ENCODE measurements at regions of chr20 and their contacts with region 1.

Region 1: DNA sequence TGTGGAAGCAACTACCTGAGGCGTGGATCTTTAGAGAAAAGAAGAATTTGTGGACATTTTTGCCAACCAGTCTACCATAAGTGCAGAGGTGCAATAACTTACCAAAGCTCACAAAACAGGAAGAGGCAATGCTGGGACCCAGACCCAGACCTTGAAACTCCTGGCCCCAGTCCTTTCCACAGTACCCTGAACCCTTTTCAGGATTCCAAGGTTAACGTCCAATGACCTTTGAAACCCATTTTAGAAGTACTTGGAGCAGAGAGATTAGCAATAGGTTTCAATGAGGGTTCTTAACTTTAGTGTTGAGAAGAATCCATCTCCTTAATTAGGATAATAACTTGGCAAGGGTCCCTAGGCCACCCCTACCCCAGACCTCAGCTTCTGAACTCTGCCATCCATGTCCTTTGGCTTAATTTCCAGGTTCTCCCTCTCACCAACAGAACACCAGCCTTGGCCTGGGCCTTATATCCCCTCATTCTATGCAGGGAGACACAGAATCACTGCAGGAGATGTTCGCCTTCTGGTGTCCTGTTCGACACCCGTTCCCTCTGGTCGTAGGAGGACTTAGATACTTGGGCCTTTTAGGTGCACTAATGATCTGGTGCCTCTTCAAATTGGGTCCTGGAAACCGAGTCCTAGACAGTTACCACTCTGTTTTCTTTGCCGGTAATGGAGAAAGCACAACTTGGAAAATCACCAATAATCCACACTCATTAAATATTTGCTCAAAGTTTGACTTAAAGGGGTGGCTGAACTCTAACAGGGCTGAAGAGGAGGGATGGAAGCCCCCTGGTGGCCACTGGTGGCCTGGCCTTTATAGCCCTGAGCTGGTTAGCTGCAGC is 40.6 kb downstream of the ISM1 start:
- DNase-seq: peak; percentile 81
- ATAC-seq: peak; percentile 96
- H3K4me3 Mint-ChIP-seq: no peak overlapping the region
- H3K27ac Mint-ChIP-seq: no peak overlapping the region
- H3K4me1 Mint-ChIP-seq: peaks cover 20% of the 10 kb centered on the region
- H3K27me3 Mint-ChIP-seq: no peaks in the 10 kb centered on the region

Region 2: GRCh38 chr20:12687476-12687875 is 574.2 kb before region 1 on chr20:
- CTCF ChIA-PET with region 1: no interaction called
- POLR2A ChIA-PET with region 1: no interaction called
- intact Hi-C with region 1: no loop called
- DNase-seq: no peak
- ATAC-seq: no peak
- H3K4me3 Mint-ChIP-seq: no peak overlapping the region
- H3K27ac Mint-ChIP-seq: no peak overlapping the region
- H3K4me1 Mint-ChIP-seq: no peaks in the 10 kb centered on the region
- H3K27me3 Mint-ChIP-seq: no peaks in the 10 kb centered on the region

Region 3: GRCh38 chr20:12748359-12748994 is 513.2 kb before region 1 on chr20:
- CTCF ChIA-PET with region 1: no interaction called
- POLR2A ChIA-PET with region 1: no interaction called
- intact Hi-C with region 1: loop called in 1 of 2 experiments (anchors 5 kb)
- DNase-seq: no peak
- ATAC-seq: no peak
- H3K4me3 Mint-ChIP-seq: no peak overlapping the region
- H3K27ac Mint-ChIP-seq: no peak overlapping the region
- H3K4me1 Mint-ChIP-seq: no peaks in the 10 kb centered on the region
- H3K27me3 Mint-ChIP-seq: peaks cover 2% of the 10 kb centered on the region

Region 4: DNA sequence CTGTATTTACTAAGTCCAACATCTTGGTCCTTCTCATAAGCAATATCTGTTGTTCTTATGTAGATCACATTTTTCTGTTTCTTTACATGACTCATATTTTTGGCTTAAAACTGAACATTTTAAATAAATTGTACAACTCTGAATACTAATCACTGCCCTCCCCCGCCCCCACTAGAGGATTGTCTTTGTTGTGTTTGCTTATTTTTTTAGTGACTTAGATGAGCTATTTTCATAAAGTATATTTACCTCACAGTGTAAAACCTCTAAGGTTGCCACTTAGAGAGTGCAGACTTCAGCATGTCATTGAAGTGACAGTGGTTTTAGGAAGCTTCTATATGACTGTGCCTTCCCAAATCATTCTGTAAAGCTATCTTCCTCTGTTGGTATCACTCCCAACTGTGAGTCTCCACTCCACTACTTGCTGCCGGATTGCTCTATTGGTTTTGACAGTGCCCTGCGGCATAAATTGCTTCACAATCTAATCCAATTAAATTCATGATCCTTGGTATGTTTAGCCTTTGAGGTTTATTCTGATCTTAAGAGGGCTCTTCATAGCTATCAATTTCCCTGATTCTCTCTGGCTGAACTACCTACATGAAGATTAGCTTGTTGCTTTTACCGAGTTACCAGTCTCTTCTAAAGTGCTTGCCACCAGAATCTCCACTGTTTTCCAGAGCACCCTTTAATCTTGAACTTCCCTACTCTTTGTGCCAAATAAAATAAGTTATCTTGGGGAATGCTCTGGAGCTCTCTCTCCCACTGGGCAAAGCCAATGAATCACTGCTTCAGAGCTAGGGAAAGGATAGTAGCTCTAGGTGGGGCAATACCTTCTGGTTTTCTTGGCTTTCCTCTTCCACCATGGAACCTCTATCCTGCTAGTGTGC is 219.9 kb before region 1 on chr20:
- CTCF ChIA-PET with region 1: no interaction called
- POLR2A ChIA-PET with region 1: no interaction called
- intact Hi-C with region 1: no loop called
- DNase-seq: no peak
- ATAC-seq: no peak
- H3K4me3 Mint-ChIP-seq: no peak overlapping the region
- H3K27ac Mint-ChIP-seq: no peak overlapping the region
- H3K4me1 Mint-ChIP-seq: no peaks in the 10 kb centered on the region
- H3K27me3 Mint-ChIP-seq: no peaks in the 10 kb centered on the region

Region 5: GRCh38 chr20:13119583-13119982 is 142.1 kb before region 1 on chr20:
- CTCF ChIA-PET with region 1: interaction called, 9 read pairs
- POLR2A ChIA-PET with region 1: no interaction called
- intact Hi-C with region 1: loop called (anchors 1 kb)
- DNase-seq: peak; percentile 30
- ATAC-seq: peak; percentile 71
- H3K4me3 Mint-ChIP-seq: no peak overlapping the region
- H3K27ac Mint-ChIP-seq: no peak overlapping the region
- H3K4me1 Mint-ChIP-seq: no peaks in the 10 kb centered on the region
- H3K27me3 Mint-ChIP-seq: no peaks in the 10 kb centered on the region

Region 6: GRCh38 chr20:13139459-13140150 is 122.1 kb before region 1 on chr20:
- CTCF ChIA-PET with region 1: interaction called, 6 read pairs
- POLR2A ChIA-PET with region 1: no interaction called
- intact Hi-C with region 1: loop called in 1 of 2 experiments (anchors 5 kb)
- DNase-seq: no peak
- ATAC-seq: no peak
- H3K4me3 Mint-ChIP-seq: no peak overlapping the region
- H3K27ac Mint-ChIP-seq: no peak overlapping the region
- H3K4me1 Mint-ChIP-seq: peaks cover 7% of the 10 kb centered on the region
- H3K27me3 Mint-ChIP-seq: no peaks in the 10 kb centered on the region

Region 7: GRCh38 chr20:13221673-13222318 is 39.9 kb before region 1 on chr20:
- CTCF ChIA-PET with region 1: interaction called, 4 read pairs
- POLR2A ChIA-PET with region 1: no interaction called
- intact Hi-C with region 1: loop called (anchors 1 to 5 kb)
- DNase-seq: peak; percentile 82
- ATAC-seq: peak; percentile 87
- H3K4me3 Mint-ChIP-seq: peak overlapping the region; percentile 74
- H3K27ac Mint-ChIP-seq: peak overlapping the region; percentile 37
- H3K4me1 Mint-ChIP-seq: peaks cover 17% of the 10 kb centered on the region
- H3K27me3 Mint-ChIP-seq: peaks cover 36% of the 10 kb centered on the region

Measured in activated CD4-positive, alpha-beta T cell treated with anti-CD3 and anti-CD28 coated beads for 36 hours (primary cell).